PC-9 (cell line): ENCODE measurements at regions of chr11 and their contacts with region 1.

Region 1: GRCh38 chr11:80855975-80856524 is 1415.2 kb upstream of the TENM4 start:
- DNase-seq: peak in 1 of 2 experiments; percentile 68
- H3K4me3 ChIP-seq: no peak overlapping the region
- H3K27ac ChIP-seq: no peak overlapping the region
- H3K4me1 ChIP-seq: no peaks in the 10 kb centered on the region; the same call in 1 of the 2 replicates
- H3K27me3 ChIP-seq: no peaks in the 10 kb centered on the region
- CTCF ChIP-seq: no peak

Region 2: DNA sequence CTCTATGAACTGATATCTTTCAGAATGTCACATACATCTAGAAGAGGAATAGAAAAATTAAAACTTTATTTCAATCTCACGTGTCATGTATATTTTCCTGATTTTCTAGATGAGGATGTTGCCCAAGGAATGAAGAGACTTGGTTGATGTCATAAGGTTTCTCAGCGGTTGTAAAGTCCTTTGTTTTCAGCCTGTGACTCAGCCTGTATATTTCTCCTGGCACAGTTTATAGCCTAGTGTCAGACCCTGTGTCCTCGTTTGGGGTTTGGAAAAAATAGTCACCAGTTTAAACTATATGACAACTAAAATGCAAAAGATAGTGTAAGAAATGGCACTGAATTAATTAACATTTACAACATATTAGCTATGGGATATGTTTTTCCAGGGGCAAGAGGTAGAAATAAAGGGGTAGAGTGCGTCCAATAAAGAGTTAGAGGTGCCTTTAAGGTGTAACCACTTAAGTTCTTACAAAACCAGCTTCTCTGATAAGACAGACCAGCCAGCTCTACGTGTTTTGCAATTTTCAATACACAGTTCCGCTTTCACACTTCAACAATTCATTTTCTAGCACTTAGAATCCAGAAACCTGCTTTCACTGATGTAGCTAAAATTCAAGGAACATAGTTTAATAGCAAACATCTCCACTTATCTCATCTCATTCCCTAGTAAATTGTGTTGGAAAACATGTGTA is 17.4 kb after region 1 on chr11:
- CTCF ChIA-PET with region 1: no interaction called
- POLR2A ChIA-PET with region 1: no interaction called
- intact Hi-C with region 1: loop called (anchors 1 kb)
- DNase-seq: peak; percentile 14 to 40
- H3K4me3 ChIP-seq: no peak overlapping the region; the same call in 1 of the 2 replicates
- H3K27ac ChIP-seq: no peak overlapping the region
- H3K4me1 ChIP-seq: no peaks in the 10 kb centered on the region
- H3K27me3 ChIP-seq: no peaks in the 10 kb centered on the region
- CTCF ChIP-seq: no peak

Region 3: GRCh38 chr11:80916173-80916798 is 60.2 kb after region 1 on chr11:
- CTCF ChIA-PET with region 1: no interaction called
- POLR2A ChIA-PET with region 1: no interaction called
- intact Hi-C with region 1: no loop called
- DNase-seq: no peak
- H3K4me3 ChIP-seq: no peak overlapping the region
- H3K27ac ChIP-seq: no peak overlapping the region
- H3K4me1 ChIP-seq: no peaks in the 10 kb centered on the region
- H3K27me3 ChIP-seq: no peaks in the 10 kb centered on the region
- CTCF ChIP-seq: no peak

Region 4: GRCh38 chr11:80944758-80945157 is 88.7 kb after region 1 on chr11:
- CTCF ChIA-PET with region 1: no interaction called
- POLR2A ChIA-PET with region 1: no interaction called
- intact Hi-C with region 1: no loop called
- DNase-seq: no peak
- H3K4me3 ChIP-seq: no peak overlapping the region
- H3K27ac ChIP-seq: no peak overlapping the region
- H3K4me1 ChIP-seq: no peaks in the 10 kb centered on the region
- H3K27me3 ChIP-seq: no peaks in the 10 kb centered on the region
- CTCF ChIP-seq: no peak

Region 5: DNA sequence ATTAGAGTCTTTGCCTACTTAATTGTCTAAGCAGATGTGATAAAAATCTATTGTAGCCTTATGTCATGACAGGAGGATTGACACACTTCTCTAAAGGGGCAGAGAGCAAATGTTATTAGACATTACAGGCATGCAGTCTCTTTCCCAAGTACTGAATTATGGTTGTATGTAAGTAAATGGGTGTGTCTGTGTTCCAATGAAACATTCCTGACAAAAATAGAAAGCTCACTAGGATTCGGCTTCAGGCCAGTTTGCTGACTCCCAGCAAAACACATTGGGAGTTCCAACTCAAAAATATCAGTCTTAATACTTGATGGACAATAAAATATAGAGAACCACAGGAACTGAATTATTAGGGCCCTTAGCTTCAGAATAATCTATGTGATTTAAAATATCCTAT is 397.2 kb after region 1 on chr11:
- CTCF ChIA-PET with region 1: no interaction called
- POLR2A ChIA-PET with region 1: no interaction called
- intact Hi-C with region 1: no loop called
- DNase-seq: no peak
- H3K4me3 ChIP-seq: no peak overlapping the region
- H3K27ac ChIP-seq: no peak overlapping the region
- H3K4me1 ChIP-seq: no peaks in the 10 kb centered on the region
- H3K27me3 ChIP-seq: no peaks in the 10 kb centered on the region
- CTCF ChIP-seq: no peak